A549 (cell line): ENCODE measurements at regions of chr3 and their contacts with region 1.

Region 1: GRCh38 chr3:184543843-184544512 is 17.6 kb upstream of the EPHB3 start:
- DNase-seq: peak; percentile 66 to 87
- ATAC-seq: peak; percentile 89 to 94
- H3K4me3 ChIP-seq: no peak overlapping the region
- H3K27ac ChIP-seq: no peak overlapping the region
- H3K4me1 ChIP-seq: no peaks in the 10 kb centered on the region
- CTCF ChIP-seq: peak; percentile 71
- EP300 ChIP-seq: no peak
- POLR2A ChIP-seq: no peak
- RAD21 ChIP-seq: peak; percentile 82 to 84

Region 2: GRCh38 chr3:183638101-183638852 is 905.7 kb before region 1 on chr3:
- CTCF ChIA-PET with region 1: no interaction called
- POLR2A ChIA-PET with region 1: no interaction called
- DNase-seq: no peak
- ATAC-seq: no peak
- H3K4me3 ChIP-seq: no peak overlapping the region
- H3K27ac ChIP-seq: no peak overlapping the region
- H3K4me1 ChIP-seq: peaks cover 4% of the 10 kb centered on the region; the same call in 1 of the 3 replicates
- CTCF ChIP-seq: no peak
- EP300 ChIP-seq: no peak
- POLR2A ChIP-seq: no peak
- RAD21 ChIP-seq: no peak

Region 3: DNA sequence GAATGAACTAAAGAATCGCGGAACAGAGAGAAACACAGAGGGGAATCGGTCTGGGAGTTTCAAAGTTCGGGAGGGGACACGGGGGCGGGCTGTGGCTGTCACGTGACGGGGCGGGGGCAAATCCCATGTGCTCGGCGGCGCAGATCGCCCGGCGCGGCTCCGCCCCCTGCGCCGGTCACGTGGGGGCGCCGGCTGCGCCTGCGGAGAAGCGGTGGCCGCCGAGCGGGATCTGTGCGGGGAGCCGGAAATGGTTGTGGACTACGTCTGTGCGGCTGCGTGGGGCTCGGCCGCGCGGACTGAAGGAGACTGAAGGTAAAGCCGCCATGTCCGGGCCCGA is 229.6 kb before region 1 on chr3 and contains the start of gene EIF4G1:
- CTCF ChIA-PET with region 1: no interaction called
- POLR2A ChIA-PET with region 1: no interaction called
- DNase-seq: peak; percentile 69 to 93
- ATAC-seq: peak; percentile 79 to 85
- H3K4me3 ChIP-seq: peak within 1 kb of the TSS; percentile 86
- H3K27ac ChIP-seq: peak within 1 kb of the TSS; percentile 100
- H3K4me1 ChIP-seq: peaks cover 33% of the 10 kb centered on the region
- CTCF ChIP-seq: no peak
- EP300 ChIP-seq: no peak
- POLR2A ChIP-seq: peak; percentile 44
- RAD21 ChIP-seq: no peak
- polyA plus RNA-seq, gene EIF4G1: 152 and 185 TPM in 2 replicates

Region 4: DNA sequence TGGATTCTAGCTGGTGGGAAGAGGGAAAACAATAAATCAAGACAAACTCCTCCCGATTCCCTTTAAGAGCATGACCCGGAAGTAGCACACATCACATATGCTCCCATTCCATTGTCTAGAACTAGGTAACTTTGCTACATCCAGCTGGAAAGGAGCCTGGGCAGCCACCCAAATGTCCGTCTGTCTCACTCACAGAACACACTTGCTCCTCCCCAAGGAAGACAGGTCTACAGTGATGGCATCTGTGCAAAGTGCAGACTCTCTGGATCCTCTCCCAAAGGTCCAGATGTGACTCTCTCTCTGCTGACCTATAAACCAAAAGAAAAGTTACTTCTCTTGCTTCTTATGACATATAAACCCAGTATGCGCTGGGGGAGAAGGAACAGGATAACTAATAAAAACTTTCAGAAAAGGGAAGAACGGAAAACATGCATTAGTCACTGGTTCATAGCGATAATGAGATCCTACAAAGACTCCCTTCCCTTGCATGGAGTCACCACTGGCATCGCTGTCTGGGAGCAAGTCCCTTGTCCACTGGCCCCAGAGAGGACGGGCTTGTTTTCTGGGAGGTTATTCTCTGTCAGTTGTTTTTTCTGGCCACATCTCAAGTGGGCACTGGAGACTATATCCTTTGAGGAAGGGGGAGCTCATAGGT is 12.2 kb before region 1 on chr3:
- CTCF ChIA-PET with region 1: interaction called, 52 read pairs
- POLR2A ChIA-PET with region 1: no interaction called
- DNase-seq: no peak
- ATAC-seq: no peak
- H3K4me3 ChIP-seq: no peak overlapping the region
- H3K27ac ChIP-seq: no peak overlapping the region
- H3K4me1 ChIP-seq: no peaks in the 10 kb centered on the region
- CTCF ChIP-seq: no peak
- EP300 ChIP-seq: no peak
- POLR2A ChIP-seq: no peak
- RAD21 ChIP-seq: no peak